AG04450 (cell line): ENCODE measurements at regions of chr6 and their contacts with region 1.

Region 1: DNA sequence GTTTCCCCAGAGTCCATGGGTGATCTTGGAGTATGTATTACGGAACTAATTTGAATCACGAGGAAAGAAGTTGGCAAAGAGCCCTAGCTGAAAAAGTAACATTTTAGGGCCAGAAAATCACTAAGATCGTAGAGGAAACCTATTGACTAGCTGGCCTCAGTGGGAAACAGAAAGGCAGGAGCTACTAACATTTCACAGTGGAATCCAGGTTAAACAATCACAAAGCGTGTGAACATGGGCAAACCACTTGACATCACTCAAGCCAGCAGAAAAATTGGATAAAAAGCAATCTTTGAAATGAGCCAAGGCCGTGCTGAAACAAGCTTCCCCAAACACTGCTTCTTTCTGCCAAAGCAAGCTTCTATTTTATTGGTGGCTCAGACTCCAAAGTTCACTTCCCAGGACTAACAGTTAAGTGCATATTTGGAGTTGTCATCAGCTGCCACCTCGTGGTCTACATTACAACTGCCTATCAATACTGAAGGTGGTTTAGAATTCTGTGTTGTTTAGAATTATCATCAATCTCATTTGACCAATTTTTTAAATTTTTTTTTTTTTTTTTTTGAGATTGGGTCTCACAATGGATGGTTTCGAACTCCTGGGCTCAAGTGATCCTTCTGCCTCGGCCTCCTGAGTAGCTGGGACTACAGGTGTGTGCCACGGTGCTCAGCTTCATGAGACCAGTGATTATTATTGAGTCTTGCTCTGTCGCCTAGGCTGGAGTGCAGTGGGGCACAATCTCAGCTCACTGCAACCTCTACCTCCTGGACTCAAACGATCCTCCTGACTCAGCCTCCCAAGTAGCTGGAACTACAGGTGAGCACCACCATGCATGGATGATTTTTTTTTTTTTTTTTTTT is 10.6 kb downstream of the RPS10 start:
- DNase-seq: no peak
- H3K4me3 ChIP-seq: no peak overlapping the region
- H3K27ac ChIP-seq: no peak overlapping the region
- H3K27me3 ChIP-seq: no peaks in the 10 kb centered on the region
- CTCF ChIP-seq: peak; percentile 31; the same call in 1 of the 2 replicates

Region 2: GRCh38 chr6:33975661-33976385 is 439.4 kb before region 1 on chr6:
- CTCF ChIA-PET with region 1: no interaction called
- POLR2A ChIA-PET with region 1: no interaction called
- DNase-seq: no peak
- H3K4me3 ChIP-seq: no peak overlapping the region
- H3K27ac ChIP-seq: no peak overlapping the region
- H3K27me3 ChIP-seq: peaks cover 56% of the 10 kb centered on the region
- CTCF ChIP-seq: no peak

Region 3: DNA sequence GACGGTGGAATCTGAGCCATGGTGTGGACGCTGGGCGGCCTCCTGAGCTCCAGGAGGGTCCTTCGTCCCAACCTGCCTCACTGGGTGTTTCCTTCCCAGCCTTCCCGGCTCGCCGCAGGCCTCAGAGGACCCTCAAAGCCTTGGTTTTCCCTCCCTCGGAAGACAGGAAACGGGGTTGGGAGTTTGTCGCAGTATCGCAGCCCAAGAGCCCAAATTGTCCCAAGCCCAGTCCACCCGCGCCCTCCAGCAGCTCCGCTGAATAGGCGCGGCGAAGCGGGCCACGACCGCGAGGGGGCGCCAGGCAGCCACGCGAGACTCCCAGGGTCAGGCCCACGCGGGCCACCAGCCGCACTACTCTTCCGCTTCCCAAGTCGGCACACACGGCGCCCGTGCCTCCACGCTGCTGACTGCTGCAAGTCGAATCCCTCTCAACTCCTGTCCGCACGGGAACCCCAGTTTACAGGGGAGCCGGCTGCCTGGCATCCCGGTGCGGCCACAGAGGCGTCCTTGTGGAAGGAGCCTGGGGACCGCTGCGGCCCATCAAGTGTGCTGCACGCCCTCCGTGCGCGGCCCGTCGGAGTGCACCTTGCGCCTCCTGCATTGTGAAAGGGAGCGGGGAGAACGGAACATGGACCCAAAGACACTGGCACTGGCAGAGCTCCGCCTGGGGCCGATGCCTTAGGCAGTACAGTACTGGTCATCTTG is 219.0 kb before region 1 on chr6:
- CTCF ChIA-PET with region 1: interaction called, 20 read pairs
- POLR2A ChIA-PET with region 1: no interaction called
- DNase-seq: peak; percentile 11
- H3K4me3 ChIP-seq: peak overlapping the region; percentile 54
- H3K27ac ChIP-seq: no peak overlapping the region
- H3K27me3 ChIP-seq: no peaks in the 10 kb centered on the region
- CTCF ChIP-seq: peak; percentile 89

Region 4: GRCh38 chr6:34425498-34426410 is 10.5 kb after region 1 on chr6 and contains the start of gene RPS10:
- CTCF ChIA-PET with region 1: interaction called, 7 read pairs
- POLR2A ChIA-PET with region 1: interaction called, 30 read pairs
- DNase-seq: peak; percentile 75
- H3K4me3 ChIP-seq: peak within 1 kb of the TSS; percentile 99
- H3K27ac ChIP-seq: peak within 1 kb of the TSS; percentile 65
- H3K27me3 ChIP-seq: no peaks in the 10 kb centered on the region
- CTCF ChIP-seq: no peak; the same call in 1 of the 2 replicates
- polyA plus RNA-seq, gene RPS10: 2,426 and 3,003 TPM in 2 replicates

Region 5: DNA sequence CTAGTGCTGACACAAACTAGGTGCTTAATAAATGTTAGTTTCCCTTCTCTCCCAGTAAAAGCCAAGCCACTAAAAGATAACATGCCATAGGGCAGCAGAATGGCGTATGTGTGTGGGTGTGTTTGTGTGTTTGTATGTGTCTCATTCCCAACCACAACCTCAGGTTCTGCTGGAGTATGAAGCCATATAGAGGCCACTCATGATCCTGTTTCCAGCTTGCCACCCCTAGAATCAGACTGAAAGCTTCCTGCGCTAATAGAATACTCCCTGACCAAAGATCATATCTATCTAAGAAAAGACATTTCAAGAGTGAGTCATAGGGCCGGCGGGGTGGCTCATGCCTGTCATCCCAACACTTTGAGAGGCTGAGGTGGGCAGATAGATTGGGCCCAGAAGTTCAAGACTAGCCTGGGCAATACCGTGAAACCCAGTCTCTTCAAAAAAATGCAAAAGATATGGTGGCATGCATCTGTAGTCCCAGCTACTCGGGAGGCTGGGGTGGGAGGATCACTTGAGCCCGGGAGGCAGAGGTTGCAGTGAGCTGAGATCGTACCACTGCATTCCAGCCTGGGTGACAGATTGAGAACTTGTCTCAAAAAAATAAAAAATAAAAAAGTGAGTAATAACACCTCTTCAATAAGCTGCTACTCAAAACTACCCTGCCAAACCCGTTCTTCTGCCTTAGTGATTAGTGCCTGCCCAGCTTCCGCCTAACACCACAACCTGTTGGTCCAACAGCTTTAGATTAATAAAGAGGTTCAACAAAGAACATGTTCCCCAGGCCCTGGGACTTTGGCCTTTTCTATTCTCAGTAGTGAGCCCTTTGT is 330.3 kb after region 1 on chr6:
- CTCF ChIA-PET with region 1: no interaction called
- POLR2A ChIA-PET with region 1: no interaction called
- DNase-seq: peak; percentile 7
- H3K4me3 ChIP-seq: no peak overlapping the region
- H3K27ac ChIP-seq: no peak overlapping the region
- H3K27me3 ChIP-seq: no peaks in the 10 kb centered on the region
- CTCF ChIP-seq: no peak